ENCODE measurements at regions of chr15 and their contacts with region 1.

Region 1: GRCh38 chr15:79283252-79284048 is 928 bp downstream of the ANKRD34C start:
- DNase-seq: peak; percentile 22
- H3K4me3 Mint-ChIP-seq: no peak overlapping the region
- H3K27ac Mint-ChIP-seq: no peak overlapping the region
- H3K4me1 Mint-ChIP-seq: no peaks in the 10 kb centered on the region
- H3K27me3 Mint-ChIP-seq: peaks cover 59% of the 10 kb centered on the region

Region 2: DNA sequence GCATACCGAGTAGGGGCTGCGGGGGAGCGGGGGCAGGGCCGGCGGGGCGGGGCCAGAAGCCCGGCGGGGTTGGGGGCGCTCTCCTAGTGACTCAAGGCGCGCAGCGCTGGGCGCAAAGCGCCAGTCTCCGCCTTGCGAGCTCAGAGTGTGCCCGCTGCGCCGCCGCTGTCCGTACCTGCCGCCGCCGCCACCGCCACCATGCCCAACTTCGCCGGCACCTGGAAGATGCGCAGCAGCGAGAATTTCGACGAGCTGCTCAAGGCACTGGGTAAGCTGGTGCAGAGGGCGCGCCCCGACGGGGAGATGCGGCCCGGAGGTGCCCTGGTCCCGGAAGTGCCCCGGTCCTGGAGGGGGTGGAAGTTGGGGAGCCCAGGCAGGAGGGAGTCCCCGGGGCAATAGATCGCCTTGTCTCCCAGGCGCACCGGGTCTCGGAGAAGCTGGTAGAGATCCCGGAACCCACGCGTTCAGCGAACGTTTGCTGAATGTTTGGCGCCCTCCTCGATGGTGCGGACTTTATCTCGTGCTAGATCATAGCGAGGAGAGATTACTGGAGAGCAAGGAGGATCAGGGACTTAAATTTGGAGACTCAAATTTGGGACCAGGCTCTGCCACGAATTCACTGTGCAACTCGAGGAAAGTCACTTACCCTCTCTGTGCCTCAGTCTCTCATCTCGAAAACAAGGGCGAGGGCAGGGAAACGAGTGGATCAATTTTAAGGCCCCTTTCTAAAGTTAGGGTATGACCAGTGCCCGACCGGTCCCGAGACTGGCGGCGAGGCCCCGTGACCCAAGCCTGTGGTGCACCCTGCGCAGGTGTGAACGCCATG is 943.0 kb before region 1 on chr15 and contains the start of gene CRABP1:
- intact Hi-C with region 1: loop called (anchors 10 kb)
- DNase-seq: no peak
- H3K4me3 Mint-ChIP-seq: no peak within 1 kb of the TSS
- H3K27ac Mint-ChIP-seq: no peak within 1 kb of the TSS
- H3K4me1 Mint-ChIP-seq: no peaks in the 10 kb centered on the region
- H3K27me3 Mint-ChIP-seq: peaks cover 53% of the 10 kb centered on the region
- total RNA-seq, gene CRABP1: not detected in 2 replicates

Region 3: GRCh38 chr15:79218588-79219164 is 64.8 kb before region 1 on chr15:
- intact Hi-C with region 1: no loop called
- DNase-seq: no peak
- H3K4me3 Mint-ChIP-seq: no peak overlapping the region
- H3K27ac Mint-ChIP-seq: no peak overlapping the region
- H3K4me1 Mint-ChIP-seq: no peaks in the 10 kb centered on the region
- H3K27me3 Mint-ChIP-seq: peaks cover 19% of the 10 kb centered on the region

Measured in activated T-helper 1 cell treated with anti-CD3 and anti-CD28 coated beads, Interleukin-12 subunit alpha, Interleukin-12 subunit beta, Interleukin-2, Interleukin-4 antibody, amounts not matched to agents 30 ng/mL and 10 ng/mL and 1 ng/mL, durations not matched to agents 14 hours and 24 hours and 36 hours (primary cell).